HEK293 (cell line): ENCODE measurements at regions of chr1 and their contacts with region 1.

Region 1: GRCh38 chr1:7752512-7753417 is 18.3 kb upstream of the VAMP3 start:
- H3K4me3 ChIP-seq: no peak overlapping the region
- H3K27ac ChIP-seq: no peak overlapping the region
- H3K4me1 ChIP-seq: no peaks in the 10 kb centered on the region
- CTCF ChIP-seq: peak; percentile 50

Region 2: GRCh38 chr1:7680207-7680954 is 72.4 kb before region 1 on chr1:
- CTCF ChIA-PET with region 1: interaction called, 40 read pairs
- POLR2A ChIA-PET with region 1: interaction called, 4 read pairs
- H3K4me3 ChIP-seq: peak overlapping the region; percentile 54
- H3K27ac ChIP-seq: peak overlapping the region; percentile 61; the same call in 1 of the 2 replicates
- H3K4me1 ChIP-seq: no peaks in the 10 kb centered on the region
- CTCF ChIP-seq: no peak

Region 3: GRCh38 chr1:7704214-7705047 is 48.3 kb before region 1 on chr1:
- CTCF ChIA-PET with region 1: interaction called, 14 read pairs
- POLR2A ChIA-PET with region 1: no interaction called
- H3K4me3 ChIP-seq: peak overlapping the region; percentile 78
- H3K27ac ChIP-seq: peak overlapping the region; percentile 46; the same call in 1 of the 2 replicates
- H3K4me1 ChIP-seq: no peaks in the 10 kb centered on the region
- CTCF ChIP-seq: no peak

Region 4: DNA sequence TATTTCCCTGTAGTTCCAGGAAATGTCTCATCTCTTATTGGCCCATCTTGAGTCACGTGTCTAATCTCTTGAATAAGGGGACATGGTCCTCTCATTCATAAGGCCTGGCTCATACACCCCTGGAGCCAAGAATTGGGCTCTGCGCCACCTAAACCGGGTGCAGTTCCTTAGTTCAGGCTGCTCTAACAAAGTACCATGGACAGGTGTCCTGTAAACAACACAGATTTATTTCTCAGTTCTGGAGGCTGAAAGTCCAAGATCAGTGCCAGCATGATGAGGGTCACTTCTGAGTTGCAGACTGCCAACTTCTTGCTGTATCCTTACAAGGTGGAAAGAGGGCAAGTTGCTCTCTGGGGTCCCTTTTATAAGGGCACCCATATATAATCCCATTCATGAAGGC is 41.9 kb before region 1 on chr1:
- CTCF ChIA-PET with region 1: interaction called, 14 read pairs
- POLR2A ChIA-PET with region 1: no interaction called
- H3K4me3 ChIP-seq: no peak overlapping the region
- H3K27ac ChIP-seq: no peak overlapping the region
- H3K4me1 ChIP-seq: no peaks in the 10 kb centered on the region
- CTCF ChIP-seq: no peak